ENCODE measurements at regions of chr6 and their contacts with region 1.

Region 1: DNA sequence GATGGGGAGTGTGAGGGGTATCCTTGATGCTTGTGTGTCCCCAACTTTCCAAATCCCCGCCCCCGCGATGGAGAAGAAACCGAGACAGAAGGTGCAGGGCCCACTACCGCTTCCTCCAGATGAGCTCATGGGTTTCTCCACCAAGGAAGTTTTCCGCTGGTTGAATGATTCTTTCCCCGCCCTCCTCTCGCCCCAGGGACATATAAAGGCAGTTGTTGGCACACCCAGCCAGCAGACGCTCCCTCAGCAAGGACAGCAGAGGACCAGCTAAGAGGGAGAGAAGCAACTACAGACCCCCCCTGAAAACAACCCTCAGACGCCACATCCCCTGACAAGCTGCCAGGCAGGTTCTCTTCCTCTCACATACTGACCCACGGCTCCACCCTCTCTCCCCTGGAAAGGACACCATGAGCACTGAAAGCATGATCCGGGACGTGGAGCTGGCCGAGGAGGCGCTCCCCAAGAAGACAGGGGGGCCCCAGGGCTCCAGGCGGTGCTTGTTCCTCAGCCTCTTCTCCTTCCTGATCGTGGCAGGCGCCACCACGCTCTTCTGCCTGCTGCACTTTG is at the start of gene TNF:
- DNase-seq: peak; percentile 93
- H3K4me3 Mint-ChIP-seq: peak within 1 kb of the TSS; percentile 97
- H3K27ac Mint-ChIP-seq: peak within 1 kb of the TSS; percentile 99
- H3K4me1 Mint-ChIP-seq: peaks cover 54% of the 10 kb centered on the region
- H3K27me3 Mint-ChIP-seq: peaks cover 2% of the 10 kb centered on the region
- total RNA-seq, gene TNF: 165 to 167 TPM

Region 2: GRCh38 chr6:31271641-31272357 is 303.6 kb before region 1 on chr6 and contains the start of gene HLA-C:
- CTCF ChIA-PET with region 1: no interaction called
- POLR2A ChIA-PET with region 1: no interaction called
- intact Hi-C with region 1: loop called (anchors 5 kb)
- DNase-seq: peak; percentile 95
- H3K4me3 Mint-ChIP-seq: peak within 1 kb of the TSS; percentile 95
- H3K27ac Mint-ChIP-seq: peak within 1 kb of the TSS; percentile 99
- H3K4me1 Mint-ChIP-seq: peaks cover 51% of the 10 kb centered on the region
- H3K27me3 Mint-ChIP-seq: no peaks in the 10 kb centered on the region
- total RNA-seq, gene HLA-C: 976 to 983 TPM

Region 3: DNA sequence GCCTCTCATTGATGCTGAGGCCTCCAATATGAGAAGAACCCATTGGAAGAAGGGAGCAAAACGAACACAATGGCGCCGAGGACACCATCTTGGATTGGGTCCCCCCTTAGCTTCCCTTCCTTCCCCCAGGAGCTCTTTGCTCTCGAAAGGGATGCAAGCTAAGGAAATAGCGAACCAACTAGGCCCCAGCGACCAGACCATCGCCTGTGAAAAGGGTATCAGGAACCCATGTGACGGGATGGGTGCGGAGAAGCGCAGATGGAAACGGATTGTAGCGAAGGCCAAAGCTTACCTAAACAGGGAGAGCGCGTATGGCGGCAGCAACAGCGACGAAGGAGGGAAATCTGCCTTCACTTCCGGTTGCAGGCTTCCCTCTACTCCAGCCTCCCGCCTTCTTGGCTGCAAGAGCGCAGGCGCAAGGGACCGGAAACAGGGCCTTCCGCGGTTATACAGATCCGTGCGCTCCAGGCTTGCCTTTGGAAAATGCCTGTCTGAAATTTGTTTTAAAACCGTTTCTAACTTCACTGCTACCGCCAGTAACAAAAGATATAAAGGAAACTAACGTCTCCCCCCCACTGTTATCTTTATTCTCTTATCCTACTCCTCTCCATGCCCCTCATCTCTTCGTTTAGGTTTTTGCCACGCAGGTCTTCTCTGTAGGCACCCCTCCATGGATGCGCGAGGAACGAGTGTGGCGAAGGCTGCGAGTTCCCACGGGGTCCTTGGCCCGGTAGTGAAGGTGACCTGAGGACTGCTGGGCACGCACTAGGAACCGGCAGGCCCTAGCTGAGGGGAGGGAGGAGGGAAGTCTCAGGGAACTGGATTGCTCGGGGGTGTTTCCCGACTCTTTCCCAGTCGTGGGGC is 33.5 kb before region 1 on chr6 and contains the start of gene DDX39B:
- CTCF ChIA-PET with region 1: interaction called, 1,658 read pairs
- POLR2A ChIA-PET with region 1: interaction called, 125 read pairs
- intact Hi-C with region 1: loop called (anchors 1 kb)
- DNase-seq: peak; percentile 96
- H3K4me3 Mint-ChIP-seq: peak within 1 kb of the TSS; percentile 94
- H3K27ac Mint-ChIP-seq: peak within 1 kb of the TSS; percentile 93
- H3K4me1 Mint-ChIP-seq: peaks cover 50% of the 10 kb centered on the region
- H3K27me3 Mint-ChIP-seq: no peaks in the 10 kb centered on the region
- total RNA-seq, gene DDX39B: 538 to 547 TPM

Region 4: GRCh38 chr6:31739639-31740396 is 164.4 kb after region 1 on chr6 and contains the start of gene MSH5:
- CTCF ChIA-PET with region 1: no interaction called
- POLR2A ChIA-PET with region 1: no interaction called
- intact Hi-C with region 1: no loop called
- DNase-seq: peak; percentile 99
- H3K4me3 Mint-ChIP-seq: peak within 1 kb of the TSS; percentile 94
- H3K27ac Mint-ChIP-seq: peak within 1 kb of the TSS; percentile 91
- H3K4me1 Mint-ChIP-seq: peaks cover 48% of the 10 kb centered on the region
- H3K27me3 Mint-ChIP-seq: no peaks in the 10 kb centered on the region
- total RNA-seq, gene MSH5: 80.9 to 83.8 TPM

Region 5: GRCh38 chr6:31822036-31822821 is 246.8 kb after region 1 on chr6:
- CTCF ChIA-PET with region 1: no interaction called
- POLR2A ChIA-PET with region 1: no interaction called
- intact Hi-C with region 1: loop called (anchors 5 kb)
- DNase-seq: peak; percentile 84
- H3K4me3 Mint-ChIP-seq: peak overlapping the region; percentile 89
- H3K27ac Mint-ChIP-seq: peak overlapping the region; percentile 96
- H3K4me1 Mint-ChIP-seq: peaks cover 70% of the 10 kb centered on the region
- H3K27me3 Mint-ChIP-seq: no peaks in the 10 kb centered on the region

Region 6: GRCh38 chr6:32081168-32081990 is 506.0 kb after region 1 on chr6:
- CTCF ChIA-PET with region 1: no interaction called
- POLR2A ChIA-PET with region 1: no interaction called
- intact Hi-C with region 1: no loop called
- DNase-seq: no peak
- H3K4me3 Mint-ChIP-seq: no peak overlapping the region
- H3K27ac Mint-ChIP-seq: no peak overlapping the region
- H3K4me1 Mint-ChIP-seq: peaks cover 5% of the 10 kb centered on the region
- H3K27me3 Mint-ChIP-seq: peaks cover 24% of the 10 kb centered on the region

Region 7: GRCh38 chr6:32853541-32854375 is 1278.3 kb after region 1 on chr6 and contains the starts of genes PSMB9 and TAP1:
- CTCF ChIA-PET with region 1: no interaction called
- POLR2A ChIA-PET with region 1: no interaction called
- intact Hi-C with region 1: loop called (anchors 10 kb)
- DNase-seq: peak; percentile 97
- H3K4me3 Mint-ChIP-seq: peak within 1 kb of the TSS; percentile 99
- H3K27ac Mint-ChIP-seq: peak within 1 kb of the TSS; percentile 98
- H3K4me1 Mint-ChIP-seq: peaks cover 54% of the 10 kb centered on the region
- H3K27me3 Mint-ChIP-seq: no peaks in the 10 kb centered on the region
- total RNA-seq, gene PSMB9: 296 to 302 TPM
- total RNA-seq, gene TAP1: 245 to 258 TPM

Measured in activated CD4-positive, alpha-beta memory T cell treated with anti-CD3 and anti-CD28 coated beads for 36 hours (primary cell).